ENCODE measurements at regions of chr16 and their contacts with region 1.

Region 1: DNA sequence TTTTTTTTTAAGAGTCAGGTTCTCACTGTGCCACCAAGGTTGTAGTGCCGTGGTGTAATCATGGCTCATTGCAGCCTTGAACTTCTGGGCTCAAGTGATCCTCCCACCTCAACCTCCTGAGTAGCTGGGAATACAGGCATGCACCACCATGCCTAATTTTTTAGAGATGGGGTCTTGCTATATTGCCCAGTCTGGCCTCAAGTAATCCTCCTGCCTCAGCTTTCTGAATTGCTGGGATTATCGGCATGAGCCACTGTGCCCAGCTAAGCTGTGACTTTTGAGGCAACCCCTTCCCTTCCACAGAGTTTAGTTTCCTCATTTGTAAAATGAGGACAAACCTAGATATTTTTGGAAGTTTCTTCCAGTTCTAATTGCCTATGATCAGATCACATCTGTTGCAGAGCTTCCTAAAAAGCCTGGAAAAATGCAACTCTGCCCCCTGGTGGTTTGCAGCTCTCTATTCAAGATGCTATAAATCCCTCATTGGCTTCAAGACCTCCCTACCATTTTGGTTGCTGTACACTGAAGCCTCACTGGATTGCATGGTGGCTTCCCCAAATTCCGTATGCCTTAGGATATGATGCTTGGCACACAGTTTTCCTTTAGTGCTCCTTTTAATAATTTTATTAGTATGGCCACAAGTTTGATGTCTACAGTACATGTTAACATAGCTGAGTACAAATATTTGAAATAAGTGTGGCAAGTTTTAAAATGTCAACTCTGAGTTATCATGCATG is 19.3 kb downstream of the GDE1 start:
- DNase-seq: peak; percentile 3
- H3K4me3 ChIP-seq: no peak overlapping the region
- H3K27ac ChIP-seq: no peak overlapping the region
- H3K4me1 ChIP-seq: no peaks in the 10 kb centered on the region
- H3K27me3 ChIP-seq: no peaks in the 10 kb centered on the region
- CTCF ChIP-seq: peak; percentile 75 to 87 (median 78)
- POLR2A ChIP-seq: no peak

Region 2: DNA sequence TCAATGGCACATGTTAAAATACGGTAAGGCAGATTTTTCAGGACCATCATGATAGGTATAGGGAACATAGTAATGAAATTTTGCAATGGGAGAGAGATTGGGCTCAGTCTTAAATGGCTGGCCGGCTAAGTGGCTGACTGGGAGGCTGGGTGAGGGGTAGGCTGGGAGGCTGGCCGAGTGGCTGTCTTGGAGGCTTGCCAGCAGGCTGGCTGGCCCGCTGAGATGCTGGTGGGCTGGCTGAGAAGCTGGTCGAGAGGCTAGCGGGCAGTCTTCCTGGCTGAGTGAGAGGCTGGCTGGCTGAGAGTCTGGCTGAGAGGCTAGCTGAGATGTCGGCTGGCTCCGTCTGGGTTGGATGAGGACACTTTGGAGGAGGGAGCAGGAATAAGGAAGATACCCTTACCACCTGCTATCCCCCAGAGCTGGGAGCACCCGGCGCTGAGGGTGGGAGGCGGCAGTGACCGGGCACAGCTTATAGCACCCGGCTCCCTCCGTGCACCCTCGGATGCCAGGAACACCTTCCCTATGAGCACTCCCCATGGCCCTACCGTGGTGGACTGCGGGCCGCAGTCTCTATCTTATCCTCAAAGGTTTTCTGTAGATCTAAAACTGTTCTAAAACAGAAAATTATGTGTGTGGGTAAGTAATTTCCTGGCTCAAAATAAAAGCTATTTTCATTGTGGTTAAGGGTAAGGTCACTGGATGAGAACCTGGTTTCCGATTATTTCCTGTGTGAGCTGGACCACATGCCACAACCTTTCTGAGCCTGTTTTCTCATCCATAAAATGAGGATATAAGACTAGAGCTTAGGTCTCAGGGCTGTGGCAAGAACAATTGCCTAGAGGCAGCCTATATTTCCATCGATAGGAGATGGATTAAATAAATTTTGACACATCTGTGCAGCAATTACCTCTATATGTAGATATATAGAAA is 119.4 kb before region 1 on chr16:
- intact Hi-C with region 1: loop called (anchors 5 kb)
- DNase-seq: no peak
- H3K4me3 ChIP-seq: no peak overlapping the region
- H3K27ac ChIP-seq: no peak overlapping the region
- H3K4me1 ChIP-seq: peaks cover 0 to 7% (median 0%) of the 10 kb centered on the region in 3 donors
- H3K27me3 ChIP-seq: peaks cover 0 to 7% (median 0%) of the 10 kb centered on the region in 4 donors
- CTCF ChIP-seq: no peak
- POLR2A ChIP-seq: no peak

Region 3: DNA sequence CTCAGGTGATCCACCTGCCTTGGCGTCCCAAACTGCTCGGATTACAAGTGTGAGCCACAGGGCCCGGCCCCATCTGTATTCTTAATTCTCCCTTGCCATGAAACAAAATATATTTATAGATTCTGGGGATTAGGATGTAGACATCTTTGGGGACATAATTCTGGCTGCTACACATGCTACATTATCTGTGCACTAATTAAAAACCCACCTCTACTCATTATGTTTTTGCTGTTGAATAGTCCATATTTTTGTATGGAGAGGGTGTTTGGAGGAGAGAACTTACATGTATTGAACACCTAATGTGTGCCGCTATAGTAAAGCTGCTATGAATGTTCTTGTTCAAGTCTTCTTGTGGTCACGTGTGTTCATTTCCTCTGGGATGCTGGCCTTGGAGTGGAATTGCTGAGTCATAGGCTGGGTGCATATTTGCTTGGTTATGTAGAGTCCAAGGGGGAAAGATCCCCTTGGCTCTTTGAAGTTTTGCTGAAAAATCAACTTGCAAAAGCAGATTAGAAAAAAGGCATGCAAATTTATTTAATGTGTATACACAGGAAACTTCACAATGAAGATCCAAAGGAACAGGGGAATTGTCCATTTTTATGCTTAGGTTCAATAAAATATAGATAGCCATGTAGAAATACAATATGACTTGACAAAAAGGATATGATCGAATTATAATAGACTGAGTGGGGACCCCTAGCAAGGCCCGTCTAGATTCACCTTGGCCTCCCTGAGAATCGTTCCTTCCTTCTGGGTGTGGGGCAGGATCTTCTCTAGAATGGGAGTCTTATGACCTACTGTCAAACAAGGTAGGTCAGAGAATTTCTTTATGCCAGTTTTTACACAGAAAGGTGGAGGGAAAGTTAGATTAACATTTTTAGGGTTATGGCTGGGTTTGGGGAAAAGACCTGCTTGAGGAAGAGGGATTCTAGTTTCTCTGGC is 424.2 kb after region 1 on chr16:
- intact Hi-C with region 1: no loop called
- DNase-seq: no peak
- H3K4me3 ChIP-seq: no peak overlapping the region
- H3K27ac ChIP-seq: no peak overlapping the region
- H3K4me1 ChIP-seq: no peaks in the 10 kb centered on the region
- H3K27me3 ChIP-seq: no peaks in the 10 kb centered on the region
- CTCF ChIP-seq: no peak
- POLR2A ChIP-seq: no peak